H1 (cell line): ENCODE measurements at regions of chr1 and their contacts with region 1.

Region 1: GRCh38 chr1:173867753-173868265 is at the start of gene GAS5:
- DNase-seq: peak; percentile 96 to 100
- H3K4me3 ChIP-seq: peak within 1 kb of the TSS; percentile 90 to 100 (median 92)
- H3K27ac ChIP-seq: peak within 1 kb of the TSS; percentile 93
- H3K4me1 ChIP-seq: peaks cover 2 to 10% (median 4%) of the 10 kb centered on the region in 4 experiments; a peak in 5 of 7 replicates
- H3K27me3 ChIP-seq: no peaks in the 10 kb centered on the region
- CTCF ChIP-seq: no peak
- EP300 ChIP-seq: no peak
- POLR2A ChIP-seq: peak; percentile 99 to 100
- RAD21 ChIP-seq: no peak
- total RNA-seq, gene GAS5: 763 and 799 TPM in 2 replicates

Region 2: GRCh38 chr1:173688300-173688699 is 179.5 kb before region 1 on chr1:
- CTCF ChIA-PET with region 1: no interaction called
- POLR2A ChIA-PET with region 1: no interaction called
- DNase-seq: no peak
- H3K4me3 ChIP-seq: no peak overlapping the region
- H3K27ac ChIP-seq: no peak overlapping the region
- H3K4me1 ChIP-seq: peaks cover 0 to 4% (median 0%) of the 10 kb centered on the region in 4 experiments; a peak in 2 of 7 replicates
- H3K27me3 ChIP-seq: no peaks in the 10 kb centered on the region
- CTCF ChIP-seq: no peak
- EP300 ChIP-seq: no peak
- POLR2A ChIP-seq: no peak
- RAD21 ChIP-seq: no peak

Region 3: DNA sequence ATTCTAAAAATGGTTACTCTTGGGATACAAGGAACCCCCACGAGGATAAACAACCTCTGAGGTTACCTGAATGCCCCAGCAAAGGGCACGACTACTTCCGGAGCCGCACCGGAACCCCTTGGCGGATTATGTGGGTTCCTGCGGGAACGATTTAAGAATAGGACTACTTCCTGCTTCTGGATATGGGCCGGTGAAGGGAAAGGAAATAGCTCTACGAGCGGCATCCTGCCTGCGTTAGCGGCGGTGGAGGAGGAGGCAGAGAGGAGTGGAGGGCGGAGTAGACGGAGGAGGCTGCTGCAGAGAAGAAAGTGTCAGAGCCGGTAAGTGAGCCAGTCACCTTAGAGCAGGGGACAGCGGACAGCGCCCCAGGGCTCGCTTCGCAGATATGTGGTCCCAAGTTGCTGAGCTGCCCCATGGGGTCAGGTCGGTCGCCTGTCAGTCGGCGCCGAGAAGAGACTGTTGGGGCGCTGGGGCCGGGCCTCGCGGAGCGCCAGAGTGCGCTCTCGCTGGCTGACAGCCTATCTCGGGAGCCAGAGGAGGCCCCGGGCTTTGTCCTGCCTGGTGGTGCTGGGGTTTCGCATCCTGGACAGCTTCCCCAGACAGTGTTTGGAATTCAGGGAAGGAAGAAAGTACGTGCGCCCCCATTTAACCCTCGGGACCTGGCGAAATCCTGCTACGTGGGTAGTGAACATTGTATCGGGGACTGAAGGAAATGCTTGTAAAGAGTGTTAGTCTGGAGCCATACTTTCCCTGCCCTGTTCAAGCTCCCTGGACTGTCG is 152.9 kb before region 1 on chr1 and contains the start of gene KLHL20:
- CTCF ChIA-PET with region 1: no interaction called
- POLR2A ChIA-PET with region 1: interaction called, 10 read pairs
- DNase-seq: peak; percentile 51 to 88
- H3K4me3 ChIP-seq: peak within 1 kb of the TSS; percentile 73 to 97 (median 83)
- H3K27ac ChIP-seq: no peak within 1 kb of the TSS; the same call in 1 of the 2 replicates
- H3K4me1 ChIP-seq: no peaks in the 10 kb centered on the region
- H3K27me3 ChIP-seq: peaks cover 0 to 7% (median 0%) of the 10 kb centered on the region in 4 experiments; a peak in 2 of 7 replicates
- CTCF ChIP-seq: no peak
- EP300 ChIP-seq: peak in 1 of 2 experiments; percentile 68; a peak in 1 of 3 replicates
- POLR2A ChIP-seq: peak in 1 of 2 experiments; percentile 71; a peak in 2 of 3 replicates
- RAD21 ChIP-seq: peak; percentile 5 to 30; a peak in 2 of 4 replicates
- total RNA-seq, gene KLHL20: 12.3 and 12.8 TPM in 2 replicates

Region 4: DNA sequence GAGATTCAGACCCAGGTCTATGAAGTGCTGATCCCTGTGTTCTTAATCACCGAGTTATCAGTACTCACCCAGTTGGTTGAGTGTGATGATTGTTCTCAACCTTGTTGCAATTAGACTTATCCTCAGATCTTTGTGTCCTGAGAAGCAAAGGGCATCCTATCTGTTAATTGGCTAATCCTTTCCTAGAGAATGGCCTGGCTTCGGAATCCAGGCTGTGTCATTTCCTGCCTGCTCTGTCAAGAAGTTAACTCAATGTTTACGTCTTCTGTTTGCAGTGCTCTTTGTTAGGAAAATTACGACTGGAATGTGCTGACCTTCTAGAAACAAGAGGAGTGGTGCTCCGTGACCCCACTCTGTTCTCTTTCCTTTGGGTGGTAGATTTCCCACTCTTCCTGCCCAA is 14.7 kb before region 1 on chr1:
- CTCF ChIA-PET with region 1: interaction called, 4 read pairs
- POLR2A ChIA-PET with region 1: interaction called, 475 read pairs
- DNase-seq: no peak
- H3K4me3 ChIP-seq: no peak overlapping the region
- H3K27ac ChIP-seq: no peak overlapping the region
- H3K4me1 ChIP-seq: peaks cover 0 to 9% (median 4%) of the 10 kb centered on the region in 4 experiments; a peak in 5 of 7 replicates
- H3K27me3 ChIP-seq: no peaks in the 10 kb centered on the region
- CTCF ChIP-seq: no peak
- EP300 ChIP-seq: no peak
- POLR2A ChIP-seq: no peak
- RAD21 ChIP-seq: no peak

Region 5: DNA sequence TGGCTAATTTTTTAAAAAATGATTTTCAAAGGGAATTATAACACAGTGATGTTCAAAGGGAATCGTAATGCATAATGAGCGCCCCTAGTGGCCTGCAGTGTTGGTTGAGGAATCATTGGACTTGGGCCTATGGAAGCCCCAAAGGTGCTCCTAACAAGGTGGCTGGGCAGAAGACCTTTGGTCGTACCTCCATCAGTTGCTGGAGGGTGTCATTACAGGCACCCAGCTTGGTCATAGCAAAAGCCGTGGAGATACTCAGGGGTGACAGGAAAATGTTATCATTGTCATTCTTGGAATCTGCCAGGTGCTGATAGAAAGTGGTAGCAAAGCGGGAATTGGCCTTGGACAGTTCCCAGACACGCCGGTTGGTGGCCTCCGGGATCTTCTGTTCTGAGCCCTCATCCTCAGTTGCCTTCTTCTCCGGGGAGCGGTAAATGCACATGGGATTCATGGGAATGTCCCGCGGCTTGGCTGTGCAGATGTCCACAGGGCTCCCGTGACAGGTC is 46.6 kb after region 1 on chr1:
- CTCF ChIA-PET with region 1: interaction called, 5 read pairs
- POLR2A ChIA-PET with region 1: interaction called, 14 read pairs
- DNase-seq: peak; percentile 3 to 56
- H3K4me3 ChIP-seq: no peak overlapping the region
- H3K27ac ChIP-seq: no peak overlapping the region
- H3K4me1 ChIP-seq: no peaks in the 10 kb centered on the region; a peak in 1 of 7 replicates
- H3K27me3 ChIP-seq: no peaks in the 10 kb centered on the region
- CTCF ChIP-seq: peak; percentile 56 to 80 (median 59)
- EP300 ChIP-seq: no peak
- POLR2A ChIP-seq: no peak
- RAD21 ChIP-seq: peak; percentile 45 to 54

Region 6: GRCh38 chr1:173954179-173954578 is 86.4 kb after region 1 on chr1:
- CTCF ChIA-PET with region 1: no interaction called
- POLR2A ChIA-PET with region 1: interaction called, 14 read pairs
- DNase-seq: no peak
- H3K4me3 ChIP-seq: no peak overlapping the region
- H3K27ac ChIP-seq: no peak overlapping the region
- H3K4me1 ChIP-seq: no peaks in the 10 kb centered on the region
- H3K27me3 ChIP-seq: no peaks in the 10 kb centered on the region
- CTCF ChIP-seq: no peak
- EP300 ChIP-seq: no peak
- POLR2A ChIP-seq: no peak
- RAD21 ChIP-seq: no peak

Region 7: DNA sequence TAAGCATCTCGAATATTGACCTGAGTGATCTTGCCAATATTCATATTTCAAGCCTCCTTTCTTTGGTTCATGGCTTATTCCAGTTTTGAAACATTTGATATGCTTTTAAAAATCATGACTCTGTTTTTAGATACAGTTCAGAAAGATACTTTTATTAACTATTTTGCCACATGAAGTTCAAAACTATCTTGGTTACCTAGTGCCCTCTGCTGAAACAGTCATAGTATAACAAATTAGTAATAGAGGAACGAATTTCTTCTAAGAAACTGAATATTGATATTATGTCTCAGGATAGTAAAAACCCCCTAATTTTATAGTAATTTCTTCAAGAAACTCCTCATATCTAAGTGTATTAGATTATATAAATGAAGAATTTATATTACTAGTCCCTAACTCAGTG is 206.9 kb after region 1 on chr1:
- CTCF ChIA-PET with region 1: no interaction called
- POLR2A ChIA-PET with region 1: no interaction called
- DNase-seq: no peak
- H3K4me3 ChIP-seq: no peak overlapping the region
- H3K27ac ChIP-seq: no peak overlapping the region
- H3K4me1 ChIP-seq: peaks cover 0 to 4% (median 0%) of the 10 kb centered on the region in 4 experiments; a peak in 1 of 7 replicates
- H3K27me3 ChIP-seq: no peaks in the 10 kb centered on the region
- CTCF ChIP-seq: peak in 1 of 3 experiments; percentile 13; a peak in 1 of 4 replicates
- EP300 ChIP-seq: no peak
- POLR2A ChIP-seq: no peak
- RAD21 ChIP-seq: peak in 1 of 2 experiments; percentile 55; a peak in 3 of 4 replicates